ENCODE measurements at regions of chr11 and their contacts with region 1.

Region 1: GRCh38 chr11:95835768-95836488 is 45.6 kb downstream of the CEP57 start:
- DNase-seq: peak; percentile 84
- ATAC-seq: peak; percentile 99
- H3K4me3 ChIP-seq: no peak overlapping the region
- H3K27ac ChIP-seq: no peak overlapping the region
- H3K4me1 ChIP-seq: no peaks in the 10 kb centered on the region
- H3K27me3 ChIP-seq: no peaks in the 10 kb centered on the region
- CTCF ChIP-seq: peak; percentile 88
- EP300 ChIP-seq: peak in 1 of 2 experiments; percentile 5; a peak in 1 of 4 replicates
- POLR2A ChIP-seq: no peak
- RAD21 ChIP-seq: peak; percentile 76

Region 2: DNA sequence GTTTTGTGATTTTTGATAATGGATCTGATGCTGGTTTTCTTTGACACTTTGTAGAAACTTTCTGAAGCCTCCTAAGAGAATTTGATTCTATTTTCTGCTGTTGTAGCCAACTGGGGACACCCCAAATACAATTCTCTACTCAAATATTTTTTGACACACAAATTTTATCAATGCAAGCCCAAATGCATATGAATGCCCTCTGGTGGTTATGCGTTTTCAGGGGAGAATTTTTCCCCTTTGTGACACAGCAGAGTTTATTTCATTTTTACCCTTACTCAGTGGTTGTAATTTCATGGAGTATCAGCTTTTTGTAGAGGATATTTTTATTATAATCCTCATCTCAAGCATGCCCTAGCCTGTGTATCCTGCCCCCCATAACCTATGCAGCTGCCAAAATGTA is 132.7 kb after region 1 on chr11:
- CTCF ChIA-PET with region 1: no interaction called
- POLR2A ChIA-PET with region 1: no interaction called
- in situ Hi-C with region 1: no loop called
- intact Hi-C with region 1: loop called (anchors 2 kb)
- DNase-seq: no peak
- ATAC-seq: peak; percentile 47; the same call in 1 of the 3 replicates
- H3K4me3 ChIP-seq: no peak overlapping the region
- H3K27ac ChIP-seq: no peak overlapping the region
- H3K4me1 ChIP-seq: no peaks in the 10 kb centered on the region
- H3K27me3 ChIP-seq: peaks cover 0 to 3% of the 10 kb centered on the region in 2 experiments; a peak in 1 of 5 replicates
- CTCF ChIP-seq: no peak; the same call in 1 of the 2 replicates
- EP300 ChIP-seq: no peak
- POLR2A ChIP-seq: no peak
- RAD21 ChIP-seq: no peak

Region 3: DNA sequence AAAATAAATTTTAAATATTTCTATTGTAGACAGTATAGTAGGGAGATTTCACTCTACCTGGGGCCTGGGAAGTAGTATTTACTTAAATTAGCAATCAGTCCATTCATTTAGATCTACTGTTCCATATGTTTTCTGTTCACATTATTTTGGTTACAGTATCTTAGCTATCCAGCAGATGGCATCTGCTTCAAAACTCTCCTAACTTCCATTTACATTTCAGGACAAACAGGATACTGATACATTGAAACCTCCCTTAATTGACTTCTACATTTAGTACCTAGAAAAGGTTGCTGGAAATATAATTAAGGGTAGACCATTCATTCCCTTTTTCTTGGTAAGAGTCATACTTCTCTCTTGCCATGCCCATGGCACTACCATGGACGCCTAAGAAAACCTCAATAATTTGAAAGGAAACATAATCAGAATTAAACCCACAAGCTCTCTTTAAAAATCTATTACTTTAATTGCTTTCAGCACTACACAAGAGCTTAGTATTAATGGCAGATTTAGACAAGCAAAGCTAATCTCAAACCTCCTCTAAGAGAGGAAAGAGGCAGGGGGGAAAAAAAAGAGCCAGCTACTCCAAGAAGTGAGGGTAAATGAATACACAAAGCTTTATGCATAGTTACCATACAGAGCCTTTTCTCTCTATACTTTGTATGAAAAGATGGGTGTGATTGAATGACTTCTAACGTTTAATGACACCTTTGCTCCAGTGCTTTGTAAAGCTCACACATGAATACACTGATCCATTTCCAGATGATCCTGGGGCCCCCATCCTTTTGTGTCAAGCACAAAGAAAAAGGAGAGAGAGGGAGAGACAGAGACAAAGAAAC is 219.2 kb after region 1 on chr11:
- CTCF ChIA-PET with region 1: no interaction called
- POLR2A ChIA-PET with region 1: no interaction called
- in situ Hi-C with region 1: no loop called
- intact Hi-C with region 1: loop called (anchors 10 kb)
- DNase-seq: peak; percentile 44
- ATAC-seq: peak; percentile 47
- H3K4me3 ChIP-seq: no peak overlapping the region
- H3K27ac ChIP-seq: peak overlapping the region; percentile 7
- H3K4me1 ChIP-seq: peaks cover 57% of the 10 kb centered on the region
- H3K27me3 ChIP-seq: no peaks in the 10 kb centered on the region
- CTCF ChIP-seq: peak; percentile 65
- EP300 ChIP-seq: no peak
- POLR2A ChIP-seq: no peak
- RAD21 ChIP-seq: peak; percentile 50; the same call in 1 of the 2 replicates

Measured in HepG2 (cell line).